ENCODE measurements at regions of chr19 and their contacts with region 1.

Region 1: DNA sequence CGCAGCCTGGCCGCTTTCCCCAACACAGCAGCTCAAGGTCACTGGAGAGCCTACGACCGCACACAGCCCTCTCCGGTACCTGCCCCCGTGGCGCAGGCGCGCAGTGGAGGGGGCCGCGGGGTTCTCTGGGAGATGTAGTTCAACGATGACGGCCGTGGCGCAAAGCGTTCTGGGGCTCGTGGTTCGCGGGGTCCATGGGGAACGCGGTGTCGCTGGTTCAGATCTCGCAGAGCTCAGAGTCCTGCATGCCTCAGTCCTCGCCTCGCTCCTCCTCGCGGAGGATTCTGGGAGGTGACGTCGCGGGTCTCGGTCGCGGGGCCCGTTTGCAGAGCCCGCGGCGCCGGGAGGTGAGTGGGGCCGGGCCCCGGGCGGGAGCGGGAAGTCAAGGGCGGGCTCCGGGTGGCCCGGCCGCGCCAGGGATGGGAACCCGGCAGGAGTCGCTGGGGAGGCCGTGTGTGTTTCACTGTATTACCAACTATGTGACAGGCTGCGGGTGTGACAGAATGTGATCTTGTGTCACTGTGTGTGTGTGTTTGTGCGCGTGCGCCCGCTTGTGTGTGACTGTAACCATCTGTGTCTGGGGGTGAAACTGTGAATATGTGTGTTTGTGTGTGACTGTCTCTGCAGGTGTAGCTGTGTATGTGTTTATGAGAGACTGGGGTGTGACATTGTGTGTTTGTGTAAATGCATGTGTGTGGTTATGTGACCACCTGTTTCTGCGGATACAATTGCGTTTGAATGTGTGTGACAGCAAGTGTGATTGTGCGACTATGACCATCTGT is at the start of gene ZNF527:
- DNase-seq: peak; percentile 94
- ATAC-seq: peak; percentile 97
- H3K4me3 Mint-ChIP-seq: peak within 1 kb of the TSS; percentile 96
- H3K27ac Mint-ChIP-seq: peak within 1 kb of the TSS; percentile 97
- H3K4me1 Mint-ChIP-seq: peaks cover 11% of the 10 kb centered on the region
- H3K27me3 Mint-ChIP-seq: no peaks in the 10 kb centered on the region
- total RNA-seq, gene ZNF527: 8.7 to 9.0 TPM

Region 2: GRCh38 chr19:37217855-37218591 is 153.0 kb before region 1 on chr19 and contains the start of gene ZNF383:
- POLR2A ChIA-PET with region 1: interaction called, 13 read pairs
- DNase-seq: peak; percentile 86
- ATAC-seq: peak; percentile 88
- H3K4me3 Mint-ChIP-seq: peak within 1 kb of the TSS; percentile 98
- H3K27ac Mint-ChIP-seq: peak within 1 kb of the TSS; percentile 98
- H3K4me1 Mint-ChIP-seq: peaks cover 20% of the 10 kb centered on the region
- H3K27me3 Mint-ChIP-seq: no peaks in the 10 kb centered on the region
- total RNA-seq, gene ZNF383: 18.3 to 20.9 TPM

Region 3: DNA sequence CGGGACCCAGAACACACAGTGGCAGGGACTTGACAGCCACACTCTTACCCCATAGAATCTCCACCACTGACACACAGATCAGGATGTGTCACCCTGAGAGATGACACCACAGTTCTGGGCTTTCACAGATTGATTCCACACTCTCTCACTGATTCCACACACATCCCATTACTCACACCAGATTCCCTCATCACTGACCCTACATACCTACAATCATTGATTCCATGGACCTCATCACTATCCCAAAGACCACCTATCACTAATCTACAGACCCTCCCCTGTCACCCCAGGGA is 57.8 kb before region 1 on chr19:
- POLR2A ChIA-PET with region 1: interaction called, 19 read pairs
- DNase-seq: no peak
- ATAC-seq: no peak
- H3K4me3 Mint-ChIP-seq: peak overlapping the region; percentile 59
- H3K27ac Mint-ChIP-seq: peak overlapping the region; percentile 66
- H3K4me1 Mint-ChIP-seq: peaks cover 9% of the 10 kb centered on the region
- H3K27me3 Mint-ChIP-seq: no peaks in the 10 kb centered on the region

Region 4: DNA sequence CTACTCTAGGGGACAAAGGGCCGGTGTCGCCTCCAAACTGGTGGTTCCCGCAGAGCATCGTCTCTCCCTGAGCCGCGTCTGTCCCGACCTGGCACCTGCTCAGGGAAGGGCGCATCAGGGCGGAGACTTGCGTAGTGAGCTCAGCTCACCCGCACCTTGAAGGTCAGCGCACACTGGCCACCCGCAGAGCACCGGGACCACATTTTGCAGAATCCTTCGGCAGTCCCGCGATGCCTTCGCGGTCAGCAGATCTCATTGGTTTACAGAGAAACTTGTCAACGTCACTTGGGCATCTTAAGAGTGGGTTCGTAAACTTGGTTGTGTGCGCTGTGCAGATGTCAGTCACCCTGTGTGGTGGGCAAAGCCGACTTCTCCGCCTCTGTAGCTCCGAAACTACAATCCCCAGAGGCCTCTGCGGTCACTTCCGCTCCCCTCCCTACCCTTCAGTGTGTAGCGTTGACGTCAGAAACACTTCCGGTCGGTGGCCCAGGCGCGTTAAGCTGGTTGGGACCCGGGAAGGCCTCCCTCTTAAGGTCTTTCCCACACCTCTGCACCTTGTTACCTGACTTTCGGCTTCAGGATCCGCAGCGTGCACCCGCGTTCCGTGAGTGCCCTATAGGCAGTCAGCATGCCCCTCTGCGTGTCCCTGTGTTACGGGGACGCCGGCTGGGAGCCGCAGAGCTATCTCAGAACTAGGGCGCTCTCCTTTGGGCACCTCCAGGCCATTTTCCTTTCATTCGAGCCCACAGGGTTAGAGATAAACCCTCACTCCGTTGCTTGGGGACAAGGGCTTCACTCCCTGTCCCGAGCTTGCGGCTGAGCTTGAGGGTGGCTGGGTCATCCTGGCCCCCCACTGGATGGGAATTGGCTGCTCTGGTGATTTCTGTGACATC is 36.6 kb before region 1 on chr19:
- POLR2A ChIA-PET with region 1: interaction called, 15 read pairs
- DNase-seq: peak; percentile 84
- ATAC-seq: peak; percentile 95
- H3K4me3 Mint-ChIP-seq: peak overlapping the region; percentile 94
- H3K27ac Mint-ChIP-seq: peak overlapping the region; percentile 88
- H3K4me1 Mint-ChIP-seq: peaks cover 20% of the 10 kb centered on the region
- H3K27me3 Mint-ChIP-seq: no peaks in the 10 kb centered on the region

Region 5: DNA sequence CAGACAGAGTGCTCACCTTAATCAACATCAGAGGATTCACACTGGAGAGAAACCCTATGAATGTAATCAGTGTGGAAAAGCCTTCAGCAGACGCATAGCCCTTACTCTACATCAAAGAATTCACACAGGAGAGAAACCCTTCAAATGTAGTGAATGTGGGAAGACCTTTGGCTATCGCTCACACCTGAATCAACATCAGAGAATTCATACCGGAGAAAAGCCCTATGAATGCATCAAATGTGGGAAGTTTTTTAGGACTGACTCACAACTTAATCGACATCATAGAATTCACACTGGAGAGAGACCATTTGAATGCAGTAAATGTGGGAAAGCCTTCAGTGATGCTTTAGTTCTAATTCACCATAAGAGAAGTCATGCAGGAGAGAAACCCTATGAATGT is 18.2 kb after region 1 on chr19:
- POLR2A ChIA-PET with region 1: no interaction called
- DNase-seq: no peak
- ATAC-seq: no peak
- H3K4me3 Mint-ChIP-seq: no peak overlapping the region
- H3K27ac Mint-ChIP-seq: no peak overlapping the region
- H3K4me1 Mint-ChIP-seq: no peaks in the 10 kb centered on the region
- H3K27me3 Mint-ChIP-seq: no peaks in the 10 kb centered on the region

Region 6: DNA sequence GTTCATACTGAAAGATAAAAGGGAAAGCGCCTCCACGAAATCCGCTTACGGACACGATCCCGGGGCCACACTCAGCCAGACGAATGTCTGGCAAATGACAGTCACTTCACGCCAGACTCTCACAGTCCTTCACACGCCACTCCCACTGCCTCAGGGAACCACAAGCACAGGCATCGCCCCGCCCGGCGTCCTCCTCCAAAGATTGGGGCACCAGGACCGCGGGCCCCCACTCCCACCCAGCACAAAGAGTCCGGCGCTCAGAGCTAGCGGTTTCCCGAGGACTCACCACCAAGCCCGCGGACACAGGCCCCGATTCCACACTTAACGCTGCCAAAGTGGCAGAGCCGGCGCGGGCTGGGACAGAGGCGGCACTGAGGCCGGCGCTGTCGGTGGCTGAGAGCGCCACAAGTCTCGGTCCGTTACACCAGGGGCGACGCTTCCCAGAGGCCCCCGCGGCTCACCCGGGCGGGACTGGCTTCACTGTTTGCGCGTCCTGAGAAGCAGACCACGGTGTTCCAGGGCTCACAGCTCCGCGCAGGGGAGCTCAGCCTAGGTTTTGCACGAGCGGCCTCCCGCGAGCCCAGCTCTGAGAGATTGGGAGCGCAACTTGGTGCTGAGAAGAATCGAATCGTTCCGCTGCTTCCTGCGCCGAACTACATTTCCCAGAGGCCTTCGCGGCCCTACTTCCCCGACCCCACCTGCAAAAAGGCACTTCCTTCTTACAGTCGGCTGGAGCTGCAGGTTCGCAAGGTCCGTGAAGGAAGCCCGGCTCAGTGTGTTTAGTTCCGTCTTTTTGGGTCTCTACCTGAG is 95.9 kb after region 1 on chr19 and contains the start of gene ZNF569:
- POLR2A ChIA-PET with region 1: interaction called, 43 read pairs
- DNase-seq: peak; percentile 87
- ATAC-seq: peak; percentile 68
- H3K4me3 Mint-ChIP-seq: peak within 1 kb of the TSS; percentile 96
- H3K27ac Mint-ChIP-seq: peak within 1 kb of the TSS; percentile 89
- H3K4me1 Mint-ChIP-seq: peaks cover 20% of the 10 kb centered on the region
- H3K27me3 Mint-ChIP-seq: no peaks in the 10 kb centered on the region
- total RNA-seq, gene ZNF569: 12.8 to 12.9 TPM

Region 7: DNA sequence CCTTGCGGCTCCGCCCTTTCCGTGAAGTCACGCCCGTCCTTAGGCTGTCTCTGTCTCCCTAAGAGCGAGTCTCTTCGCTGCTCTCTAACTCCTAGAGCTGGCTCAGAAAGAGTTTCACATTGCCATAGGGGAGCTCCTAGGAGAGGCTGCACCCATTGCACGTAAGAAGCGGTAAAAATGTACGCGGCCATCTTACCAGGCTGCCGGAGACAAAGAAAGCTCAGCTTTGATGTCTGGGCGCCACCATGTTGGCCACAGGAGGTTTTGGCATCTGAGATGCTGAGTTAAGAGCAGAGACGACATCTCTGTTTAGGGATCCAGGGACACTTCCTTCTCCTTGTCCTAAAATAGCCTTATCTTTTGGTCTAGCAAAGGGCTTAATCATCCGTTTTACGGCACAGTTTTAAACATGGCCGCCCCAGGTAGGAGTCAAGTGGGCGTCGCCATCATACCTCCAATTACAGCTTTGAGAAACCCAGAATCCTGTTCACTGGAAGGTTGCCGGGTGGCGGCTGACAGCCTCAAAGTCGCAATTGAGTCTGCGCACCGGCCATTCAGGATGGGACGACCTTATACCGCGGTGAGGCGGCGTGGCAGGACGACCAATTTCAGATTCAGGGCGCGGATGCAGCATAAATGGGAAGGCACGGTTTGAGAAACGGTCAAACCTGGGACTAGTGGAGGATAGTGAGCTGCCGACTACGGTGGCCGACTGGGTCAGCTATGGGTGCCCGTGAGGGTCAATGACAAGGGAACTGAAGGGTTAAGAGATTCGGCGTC is 135.5 kb after region 1 on chr19 and contains the start of gene ZNF793:
- POLR2A ChIA-PET with region 1: interaction called, 16 read pairs
- DNase-seq: peak; percentile 85
- ATAC-seq: peak; percentile 91
- H3K4me3 Mint-ChIP-seq: no peak within 1 kb of the TSS
- H3K27ac Mint-ChIP-seq: no peak within 1 kb of the TSS
- H3K4me1 Mint-ChIP-seq: peaks cover 2% of the 10 kb centered on the region
- H3K27me3 Mint-ChIP-seq: no peaks in the 10 kb centered on the region
- total RNA-seq, gene ZNF793: 10.6 to 11.1 TPM